ENCODE measurements at regions of chr4 and their contacts with region 1.

Region 1: GRCh38 chr4:141346144-141346543 is 125.4 kb downstream of the ZNF330 start:
- DNase-seq: peak; percentile 66
- H3K4me3 Mint-ChIP-seq: no peak overlapping the region
- H3K27ac Mint-ChIP-seq: no peak overlapping the region
- H3K4me1 Mint-ChIP-seq: peaks cover 11% of the 10 kb centered on the region
- H3K27me3 Mint-ChIP-seq: no peaks in the 10 kb centered on the region
- CTCF ChIP-seq: peak; percentile 58

Region 2: DNA sequence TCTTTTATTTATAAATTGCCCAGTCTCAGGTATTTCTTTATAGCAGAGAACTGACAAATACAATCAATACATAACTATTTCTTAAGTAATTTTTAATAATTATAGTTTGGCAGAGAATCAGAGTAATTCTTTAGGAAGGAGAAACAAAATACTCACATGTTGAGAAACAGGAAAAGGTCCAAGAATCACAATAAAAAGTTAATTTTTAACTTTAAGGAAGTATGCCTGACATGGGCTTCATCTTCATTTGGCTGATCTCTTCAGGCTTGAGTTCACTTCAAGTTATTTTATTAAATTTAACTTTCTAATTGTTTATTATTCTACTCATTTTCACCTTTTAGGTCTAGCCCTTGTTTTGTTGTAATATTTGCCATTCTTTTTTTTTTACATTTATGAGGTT is 176.8 kb before region 1 on chr4:
- CTCF ChIA-PET with region 1: no interaction called
- POLR2A ChIA-PET with region 1: no interaction called
- intact Hi-C with region 1: no loop called
- DNase-seq: no peak
- H3K4me3 Mint-ChIP-seq: no peak overlapping the region
- H3K27ac Mint-ChIP-seq: no peak overlapping the region
- H3K4me1 Mint-ChIP-seq: no peaks in the 10 kb centered on the region
- H3K27me3 Mint-ChIP-seq: peaks cover 28% of the 10 kb centered on the region
- CTCF ChIP-seq: no peak

Region 3: DNA sequence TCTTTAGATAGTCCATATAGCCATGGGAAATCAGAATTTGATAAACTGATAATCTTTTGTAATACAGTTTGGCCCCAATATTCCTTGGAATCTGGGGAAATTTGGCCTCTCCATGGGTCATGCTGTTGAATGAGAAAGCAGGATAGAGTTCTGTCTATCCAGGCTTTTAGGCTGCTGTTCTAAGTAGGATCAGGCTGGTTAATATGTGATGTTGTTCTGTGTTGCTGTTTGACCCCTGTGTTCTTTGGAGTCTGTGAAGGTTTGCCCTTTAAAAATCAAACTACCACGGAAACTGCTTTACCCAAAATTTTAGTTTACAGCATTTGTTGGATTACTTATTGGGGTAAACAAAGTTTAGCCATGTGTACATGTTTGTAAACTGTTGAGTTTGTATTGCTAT is 11.0 kb before region 1 on chr4:
- CTCF ChIA-PET with region 1: interaction called, 15 read pairs
- POLR2A ChIA-PET with region 1: interaction called, 6 read pairs
- intact Hi-C with region 1: no loop called
- DNase-seq: no peak
- H3K4me3 Mint-ChIP-seq: no peak overlapping the region
- H3K27ac Mint-ChIP-seq: no peak overlapping the region
- H3K4me1 Mint-ChIP-seq: peaks cover 13% of the 10 kb centered on the region
- H3K27me3 Mint-ChIP-seq: no peaks in the 10 kb centered on the region
- CTCF ChIP-seq: no peak

Region 4: GRCh38 chr4:141657553-141658250 is 311.6 kb after region 1 on chr4:
- CTCF ChIA-PET with region 1: interaction called, 7 read pairs
- POLR2A ChIA-PET with region 1: no interaction called
- intact Hi-C with region 1: loop called (anchors 1 kb)
- DNase-seq: no peak
- H3K4me3 Mint-ChIP-seq: no peak overlapping the region
- H3K27ac Mint-ChIP-seq: no peak overlapping the region
- H3K4me1 Mint-ChIP-seq: no peaks in the 10 kb centered on the region
- H3K27me3 Mint-ChIP-seq: no peaks in the 10 kb centered on the region
- CTCF ChIP-seq: no peak

Region 5: GRCh38 chr4:141711014-141711610 is 365.0 kb after region 1 on chr4:
- CTCF ChIA-PET with region 1: interaction called, 19 read pairs
- POLR2A ChIA-PET with region 1: no interaction called
- intact Hi-C with region 1: loop called (anchors 1 kb)
- DNase-seq: peak; percentile 49
- H3K4me3 Mint-ChIP-seq: no peak overlapping the region
- H3K27ac Mint-ChIP-seq: no peak overlapping the region
- H3K4me1 Mint-ChIP-seq: peaks cover 20% of the 10 kb centered on the region
- H3K27me3 Mint-ChIP-seq: no peaks in the 10 kb centered on the region
- CTCF ChIP-seq: peak; percentile 42

Region 6: DNA sequence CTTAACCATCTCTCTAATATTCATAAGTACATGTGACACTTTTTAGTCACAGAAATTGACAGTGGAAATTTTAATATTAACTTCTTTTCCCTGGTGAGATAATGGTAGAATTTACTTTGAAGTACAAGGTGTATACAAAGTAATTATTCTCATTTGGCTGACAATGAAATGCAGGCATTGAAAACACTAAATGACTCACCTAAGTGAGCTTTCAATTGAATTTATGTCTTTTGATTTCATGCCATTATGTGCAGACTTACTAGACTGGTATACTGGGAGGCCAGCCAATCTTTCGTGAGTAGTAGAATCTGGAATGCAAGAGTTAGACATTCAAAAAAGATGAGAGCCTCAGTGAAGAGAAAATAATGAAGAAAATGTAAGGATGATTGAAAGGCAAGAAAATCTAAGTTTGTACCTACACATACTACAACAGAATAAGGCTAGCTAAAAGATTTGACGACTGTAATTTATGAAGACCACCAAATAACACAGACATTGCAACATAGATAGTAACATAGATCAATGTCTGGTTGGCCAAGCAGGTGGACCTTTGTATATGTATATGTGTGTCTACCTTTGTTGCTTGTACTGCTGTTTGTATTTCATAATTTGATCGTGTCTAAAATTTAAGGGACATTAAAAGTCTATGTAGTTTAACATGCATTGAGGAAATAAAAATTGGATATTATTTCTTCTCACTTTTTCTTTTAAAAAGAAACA is 749.9 kb after region 1 on chr4:
- CTCF ChIA-PET with region 1: interaction called, 3 read pairs
- POLR2A ChIA-PET with region 1: no interaction called
- intact Hi-C with region 1: loop called (anchors 10 kb)
- DNase-seq: peak; percentile 98
- H3K4me3 Mint-ChIP-seq: peak overlapping the region; percentile 7
- H3K27ac Mint-ChIP-seq: peak overlapping the region; percentile 86
- H3K4me1 Mint-ChIP-seq: peaks cover 27% of the 10 kb centered on the region
- H3K27me3 Mint-ChIP-seq: no peaks in the 10 kb centered on the region
- CTCF ChIP-seq: no peak

Region 7: GRCh38 chr4:142297313-142297712 is 951.2 kb after region 1 on chr4:
- CTCF ChIA-PET with region 1: no interaction called
- POLR2A ChIA-PET with region 1: no interaction called
- intact Hi-C with region 1: no loop called
- DNase-seq: no peak
- H3K4me3 Mint-ChIP-seq: no peak overlapping the region
- H3K27ac Mint-ChIP-seq: no peak overlapping the region
- H3K4me1 Mint-ChIP-seq: no peaks in the 10 kb centered on the region
- H3K27me3 Mint-ChIP-seq: no peaks in the 10 kb centered on the region
- CTCF ChIP-seq: no peak

Region 8: DNA sequence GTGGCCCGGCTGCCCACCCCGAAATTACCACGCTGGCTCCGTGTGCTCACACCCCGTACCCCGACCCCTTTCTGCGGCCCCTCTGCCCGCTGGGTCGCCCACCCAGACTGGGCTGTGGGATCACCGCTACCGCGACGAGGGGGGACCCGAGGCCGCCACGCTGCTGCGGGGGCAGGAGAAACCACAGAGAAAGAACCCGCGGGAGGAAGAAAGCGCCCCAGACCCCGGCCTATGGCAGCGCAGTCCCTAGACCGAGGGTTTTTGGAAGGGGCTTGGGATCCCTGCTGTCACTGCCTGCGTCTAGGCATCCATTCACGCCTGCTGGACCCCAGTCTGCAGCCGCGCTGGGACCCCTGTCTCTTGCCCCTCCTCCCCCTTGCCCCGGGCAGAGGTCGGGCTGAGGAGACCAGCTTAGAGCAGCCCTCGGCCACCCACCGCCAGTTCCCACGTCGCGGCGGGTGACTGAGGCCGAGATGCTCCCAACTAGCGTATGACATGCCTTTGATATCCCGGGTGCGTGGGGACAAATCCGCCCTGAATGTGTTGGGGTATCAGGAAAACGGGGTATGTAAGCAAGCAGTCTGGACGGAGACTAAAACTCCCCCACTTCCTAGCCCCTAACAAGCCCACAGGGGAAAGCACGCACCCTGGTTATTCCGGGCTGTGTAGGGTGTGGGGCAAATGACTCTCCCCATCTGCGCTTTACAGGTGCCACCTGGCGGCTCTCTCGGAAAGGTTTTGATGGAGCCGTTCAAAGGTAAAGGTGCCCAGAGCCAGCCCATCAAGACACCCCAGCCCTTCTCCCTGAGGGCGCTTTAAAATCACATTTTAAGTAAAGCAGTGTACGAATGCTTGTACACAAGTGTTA is 1500.8 kb after region 1 on chr4:
- CTCF ChIA-PET with region 1: interaction called, 3 read pairs
- POLR2A ChIA-PET with region 1: no interaction called
- intact Hi-C with region 1: loop called (anchors 10 kb)
- DNase-seq: peak; percentile 79
- H3K4me3 Mint-ChIP-seq: peak overlapping the region; percentile 82
- H3K27ac Mint-ChIP-seq: no peak overlapping the region
- H3K4me1 Mint-ChIP-seq: peaks cover 6% of the 10 kb centered on the region
- H3K27me3 Mint-ChIP-seq: no peaks in the 10 kb centered on the region
- CTCF ChIP-seq: peak; percentile 79